Sigmoid colon (tissue), 7 donors: ENCODE measurements at regions of chr1 and their contacts with region 1.

Region 1: DNA sequence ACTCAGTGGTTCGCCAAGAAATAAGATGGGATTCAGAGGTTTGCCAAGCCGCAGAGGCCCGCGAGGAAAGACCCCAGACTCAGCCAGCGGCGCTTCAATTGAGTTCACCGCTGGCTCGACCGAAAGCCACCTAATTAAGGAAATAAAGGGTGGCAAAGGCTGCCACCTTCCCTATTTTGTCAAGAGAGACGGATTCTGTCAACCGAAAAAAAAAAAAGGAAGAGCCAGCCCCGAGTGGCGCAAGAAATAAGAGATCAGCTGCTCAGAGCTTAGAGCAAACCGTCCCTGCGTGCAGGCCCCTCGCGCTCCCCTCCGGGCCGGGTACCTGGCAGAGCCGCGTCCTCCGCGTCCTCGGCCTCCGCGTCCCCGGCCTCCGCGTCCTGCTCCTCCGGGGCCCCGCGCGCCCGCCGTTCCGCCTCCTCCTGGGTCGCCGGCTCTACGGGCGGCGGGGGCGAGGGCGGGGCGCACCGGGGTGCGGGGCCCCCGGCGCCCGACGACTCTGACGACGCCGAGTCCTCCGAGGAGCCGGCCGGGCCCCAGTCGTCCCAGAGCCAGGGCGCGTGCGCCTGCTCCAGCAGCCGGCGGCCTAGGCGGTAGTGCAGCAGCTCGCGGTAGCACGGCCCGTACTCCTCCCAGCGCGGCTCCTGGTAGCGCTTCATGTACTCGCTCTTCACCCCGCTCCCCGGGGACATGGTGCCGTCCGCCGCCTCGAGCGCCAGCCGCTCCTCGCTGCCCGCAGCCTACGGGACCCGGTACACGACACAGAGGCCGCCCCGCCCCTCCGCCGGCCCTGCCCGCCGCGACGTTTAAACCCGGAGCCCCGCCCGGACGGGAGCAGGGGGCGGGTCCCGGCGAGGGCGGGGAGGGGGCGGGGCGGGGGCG is 832 bp downstream of the CCSAP start:
- DNase-seq: peak; percentile 91
- H3K4me3 ChIP-seq: peak overlapping the region; percentile 83 to 94 (median 92)
- H3K27ac ChIP-seq: peak overlapping the region; percentile 91 to 97 (median 93)
- H3K4me1 ChIP-seq: peaks cover 0 to 21% (median 15%) of the 10 kb centered on the region in 4 donors
- H3K27me3 ChIP-seq: no peaks in the 10 kb centered on the region
- CTCF ChIP-seq: no peak
- EP300 ChIP-seq: no peak
- POLR2A ChIP-seq: peak in 1 of 2 donors; percentile 5

Region 2: GRCh38 chr1:229270547-229271447 is 71.2 kb before region 1 on chr1 and contains the start of gene RAB4A:
- intact Hi-C with region 1: loop called (anchors 5 kb)
- DNase-seq: peak; percentile 92
- H3K4me3 ChIP-seq: peak within 1 kb of the TSS; percentile 49 to 93 (median 74)
- H3K27ac ChIP-seq: peak within 1 kb of the TSS; percentile 82 to 89 (median 85)
- H3K4me1 ChIP-seq: peaks cover 0 to 47% (median 47%) of the 10 kb centered on the region in 4 donors
- H3K27me3 ChIP-seq: no peaks in the 10 kb centered on the region
- CTCF ChIP-seq: no peak
- EP300 ChIP-seq: no peak
- POLR2A ChIP-seq: no peak
- total RNA-seq, gene RAB4A: 41.8 to 54.2 (median 50.6) TPM

Region 3: GRCh38 chr1:229318056-229318455 is 24.0 kb before region 1 on chr1:
- intact Hi-C with region 1: no loop called
- DNase-seq: no peak
- H3K4me3 ChIP-seq: no peak overlapping the region
- H3K27ac ChIP-seq: no peak overlapping the region
- H3K4me1 ChIP-seq: no peaks in the 10 kb centered on the region
- H3K27me3 ChIP-seq: no peaks in the 10 kb centered on the region
- CTCF ChIP-seq: no peak
- EP300 ChIP-seq: no peak
- POLR2A ChIP-seq: no peak

Region 4: DNA sequence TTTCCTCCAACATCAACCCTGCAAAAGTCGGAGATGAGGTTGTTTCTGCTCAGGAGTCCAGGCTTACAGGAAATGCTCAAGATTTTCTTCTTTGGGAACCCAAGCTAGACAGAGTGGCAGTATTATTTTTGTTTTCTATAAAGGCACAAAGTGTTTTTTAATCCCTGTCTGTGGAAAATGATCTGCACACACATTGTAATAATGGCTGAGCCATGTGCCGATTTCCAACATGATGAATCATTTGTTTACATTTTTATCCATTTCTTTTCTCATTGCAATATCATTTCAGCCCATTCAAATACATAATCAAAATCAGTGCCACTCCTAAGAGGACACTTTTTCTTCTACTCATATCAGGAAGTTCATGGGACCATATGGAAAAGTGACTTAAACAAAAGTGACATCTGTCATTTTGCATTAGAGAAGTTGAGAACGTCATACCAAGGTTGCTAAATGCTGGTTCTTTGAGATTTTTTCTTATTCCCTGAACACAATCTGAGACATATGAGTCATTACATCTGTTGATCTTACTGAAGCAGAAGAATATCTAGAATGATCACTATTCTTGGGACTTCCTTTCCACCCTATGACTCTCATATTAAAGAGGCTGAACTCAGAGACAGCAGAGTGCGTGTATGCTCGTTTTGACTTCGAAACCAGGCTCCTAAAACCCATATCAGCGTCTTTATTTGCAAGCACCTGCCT is 47.0 kb after region 1 on chr1:
- intact Hi-C with region 1: no loop called
- DNase-seq: no peak
- H3K4me3 ChIP-seq: no peak overlapping the region
- H3K27ac ChIP-seq: no peak overlapping the region
- H3K4me1 ChIP-seq: no peaks in the 10 kb centered on the region
- H3K27me3 ChIP-seq: peaks cover 0 to 7% (median 0%) of the 10 kb centered on the region in 3 donors
- CTCF ChIP-seq: no peak
- EP300 ChIP-seq: no peak
- POLR2A ChIP-seq: no peak

Region 5: DNA sequence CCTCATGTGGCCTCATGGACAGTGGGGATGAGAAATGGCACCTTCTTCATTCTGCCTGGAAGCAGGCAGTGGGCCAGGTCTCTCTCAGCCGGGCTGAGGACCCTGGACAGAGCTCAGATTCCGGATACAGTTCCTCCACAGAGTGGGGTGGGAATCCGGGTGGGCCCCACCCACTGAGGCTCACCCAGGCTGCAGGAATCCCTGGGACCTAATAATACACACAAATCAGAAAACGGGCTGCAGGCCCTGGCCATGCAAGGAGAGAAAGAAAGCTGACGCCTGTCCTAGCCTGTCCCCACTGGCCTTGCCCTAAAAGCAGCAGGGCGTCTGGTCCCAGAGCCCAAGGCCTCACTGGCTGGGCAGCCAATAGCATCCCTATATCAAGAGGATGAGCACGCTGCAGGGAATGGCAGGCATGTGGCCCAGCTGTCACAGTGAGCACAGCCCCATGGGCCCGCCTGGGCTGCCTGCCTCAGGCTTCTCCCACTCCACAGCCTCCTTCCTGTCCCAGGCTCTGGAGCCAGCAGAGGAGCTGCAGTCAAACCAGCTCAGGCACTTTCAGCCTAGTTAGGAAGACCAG is 66.5 kb after region 1 on chr1:
- intact Hi-C with region 1: loop called (anchors 5 kb)
- DNase-seq: no peak
- H3K4me3 ChIP-seq: no peak overlapping the region
- H3K27ac ChIP-seq: no peak overlapping the region
- H3K4me1 ChIP-seq: peaks cover 0 to 50% (median 38%) of the 10 kb centered on the region in 4 donors
- H3K27me3 ChIP-seq: peaks cover 6 to 42% (median 33%) of the 10 kb centered on the region in 3 donors
- CTCF ChIP-seq: no peak
- EP300 ChIP-seq: no peak
- POLR2A ChIP-seq: no peak

Region 6: DNA sequence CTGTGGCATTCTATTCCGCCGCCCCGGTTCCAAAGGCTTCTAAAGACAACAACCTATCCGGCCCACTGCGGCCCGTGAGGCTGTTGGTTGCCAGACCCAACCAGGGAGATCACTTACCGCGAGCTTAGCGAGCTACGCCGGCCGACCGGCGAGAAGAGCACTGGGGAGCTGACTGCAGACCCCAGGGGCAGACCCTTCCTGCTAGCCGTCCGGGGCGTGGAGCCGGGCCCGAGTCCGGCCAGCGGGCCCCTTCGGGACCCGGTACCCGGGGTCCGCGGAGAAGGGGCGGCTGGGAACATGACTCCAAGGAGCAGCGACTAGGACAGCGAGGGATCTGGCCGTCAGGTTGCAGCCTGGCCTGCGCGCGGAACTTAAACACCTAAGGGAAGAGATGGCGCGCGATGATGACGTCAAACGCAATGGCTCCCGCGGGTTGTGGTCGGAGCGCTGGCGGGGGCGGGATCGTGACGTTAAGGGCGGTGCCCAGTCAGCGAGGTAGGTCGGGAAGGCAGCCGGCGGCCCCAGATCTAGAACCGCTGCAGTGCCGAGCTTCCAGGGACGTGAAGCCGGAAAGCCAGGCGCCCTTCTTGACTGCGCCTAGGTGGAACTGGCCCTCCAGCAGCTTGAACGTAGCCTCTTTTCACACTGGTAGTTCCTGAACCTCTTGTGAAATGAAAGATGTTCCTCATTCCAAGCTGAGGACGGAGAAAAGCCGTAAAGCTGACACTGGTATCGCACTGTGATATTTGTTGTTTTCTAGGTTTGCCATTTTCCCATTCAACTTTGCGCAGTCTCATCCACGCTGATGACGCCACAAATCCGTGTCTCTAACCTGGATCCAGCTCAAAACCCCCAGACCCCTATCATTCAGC is 166.2 kb after region 1 on chr1 and contains the start of gene NUP133:
- intact Hi-C with region 1: loop called (anchors 5 kb)
- DNase-seq: peak; percentile 100
- H3K4me3 ChIP-seq: peak within 1 kb of the TSS; percentile 68 to 99 (median 97)
- H3K27ac ChIP-seq: peak within 1 kb of the TSS; percentile 91 to 98 (median 96)
- H3K4me1 ChIP-seq: peaks cover 0 to 17% (median 11%) of the 10 kb centered on the region in 4 donors
- H3K27me3 ChIP-seq: no peaks in the 10 kb centered on the region
- CTCF ChIP-seq: no peak
- EP300 ChIP-seq: peak in 1 of 4 donors; percentile 37
- POLR2A ChIP-seq: peak; percentile 89 to 90
- total RNA-seq, gene NUP133: 23.7 to 31.7 (median 27.6) TPM

Region 7: GRCh38 chr1:229582011-229582694 is 240.1 kb after region 1 on chr1:
- intact Hi-C with region 1: no loop called
- DNase-seq: peak; percentile 74
- H3K4me3 ChIP-seq: no peak overlapping the region
- H3K27ac ChIP-seq: peak overlapping the region in 3 of 4 donors; percentile 15 to 48 (median 45)
- H3K4me1 ChIP-seq: peaks cover 0 to 29% (median 13%) of the 10 kb centered on the region in 4 donors
- H3K27me3 ChIP-seq: no peaks in the 10 kb centered on the region
- CTCF ChIP-seq: no peak
- EP300 ChIP-seq: no peak
- POLR2A ChIP-seq: no peak